ENCODE measurements at regions of chr10 and their contacts with region 1.

Region 1: DNA sequence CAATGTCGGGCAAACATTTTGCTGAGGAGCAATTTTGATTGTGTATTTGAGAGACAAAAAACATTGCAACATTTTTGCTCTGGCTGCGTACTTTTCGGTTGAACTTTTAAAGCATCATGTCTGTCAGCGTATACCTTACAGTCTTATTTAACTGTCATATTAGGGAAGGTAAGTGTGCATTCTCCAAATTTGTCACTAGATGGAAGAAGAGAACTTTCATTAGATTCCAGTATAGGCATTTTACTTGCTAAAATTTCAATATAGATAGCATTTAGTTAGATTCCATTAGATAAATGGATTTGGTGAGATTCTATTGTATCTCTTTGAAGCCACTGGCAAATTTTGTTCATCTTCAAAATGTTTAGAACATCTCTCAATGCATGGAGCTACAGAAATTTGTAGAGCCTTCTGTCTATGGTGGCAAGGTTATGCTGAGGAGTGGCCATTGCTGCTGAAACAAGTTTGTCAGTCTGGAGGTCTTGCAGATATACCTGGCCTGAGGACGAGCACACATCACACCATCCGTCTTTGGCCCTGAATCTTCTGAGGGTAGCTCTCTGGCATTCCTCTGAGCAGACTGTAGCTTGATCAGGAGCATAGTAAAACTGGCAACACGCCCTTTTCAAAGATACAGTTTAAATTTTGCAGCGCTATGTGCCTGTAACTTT is 437.5 kb upstream of the MBL2 start:
- DNase-seq: peak; percentile 97
- ATAC-seq: peak; percentile 96
- H3K4me3 ChIP-seq: no peak overlapping the region
- H3K27ac ChIP-seq: no peak overlapping the region
- H3K4me1 ChIP-seq: no peaks in the 10 kb centered on the region
- H3K27me3 ChIP-seq: no peaks in the 10 kb centered on the region
- CTCF ChIP-seq: peak; percentile 99

Region 2: DNA sequence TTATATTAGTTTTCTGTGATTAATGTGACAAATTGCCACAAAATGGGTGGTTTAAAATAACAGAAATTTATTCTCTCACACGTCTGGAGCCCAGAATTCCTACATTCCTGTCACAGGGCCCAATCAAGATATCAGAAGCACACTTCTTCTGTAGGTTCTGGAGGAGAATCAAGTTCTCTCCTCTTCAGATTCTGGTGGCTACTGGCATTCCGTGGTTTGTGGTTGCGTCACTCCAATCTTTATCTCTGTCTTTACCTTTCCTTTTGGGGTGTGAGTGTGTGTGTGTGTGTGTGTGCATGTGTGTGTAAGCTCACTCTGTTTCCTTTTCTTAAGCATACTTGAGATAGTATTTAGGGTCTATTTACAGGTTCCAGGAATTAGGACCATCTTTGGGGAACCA is 1011.5 kb before region 1 on chr10:
- CTCF ChIA-PET with region 1: no interaction called
- POLR2A ChIA-PET with region 1: no interaction called
- intact Hi-C with region 1: no loop called
- DNase-seq: no peak
- ATAC-seq: no peak
- H3K4me3 ChIP-seq: no peak overlapping the region
- H3K27ac ChIP-seq: no peak overlapping the region
- H3K4me1 ChIP-seq: no peaks in the 10 kb centered on the region
- H3K27me3 ChIP-seq: peaks cover 20% of the 10 kb centered on the region; the same call in 1 of the 2 replicates
- CTCF ChIP-seq: no peak

Region 3: GRCh38 chr10:52940921-52941320 is 269.2 kb before region 1 on chr10:
- CTCF ChIA-PET with region 1: no interaction called
- POLR2A ChIA-PET with region 1: interaction called, 13 read pairs
- intact Hi-C with region 1: no loop called
- DNase-seq: no peak
- ATAC-seq: no peak
- H3K4me3 ChIP-seq: no peak overlapping the region
- H3K27ac ChIP-seq: no peak overlapping the region
- H3K4me1 ChIP-seq: no peaks in the 10 kb centered on the region
- H3K27me3 ChIP-seq: no peaks in the 10 kb centered on the region
- CTCF ChIP-seq: no peak

Region 4: DNA sequence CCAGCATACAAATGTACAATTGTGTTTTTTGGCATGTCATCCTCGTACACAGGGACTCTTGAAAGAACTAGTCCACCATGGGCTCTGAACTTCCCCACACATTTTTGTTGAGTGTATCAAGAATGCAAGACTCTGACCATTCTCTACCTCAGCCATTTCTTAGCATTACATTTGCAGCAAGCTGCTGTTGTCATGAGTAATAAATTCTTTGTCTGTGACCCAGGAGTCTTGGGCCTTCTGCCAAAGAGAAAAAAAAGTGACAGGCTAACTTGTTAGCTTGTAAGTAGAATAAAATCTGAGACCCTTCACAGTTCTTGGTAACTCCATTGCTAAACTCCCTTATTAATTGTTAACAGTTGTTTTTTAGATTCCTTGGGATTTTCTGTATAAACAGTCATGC is 104.8 kb after region 1 on chr10:
- CTCF ChIA-PET with region 1: interaction called, 5 read pairs
- POLR2A ChIA-PET with region 1: no interaction called
- intact Hi-C with region 1: loop called (anchors 1 kb)
- DNase-seq: peak; percentile 100
- ATAC-seq: peak; percentile 97
- H3K4me3 ChIP-seq: no peak overlapping the region
- H3K27ac ChIP-seq: no peak overlapping the region
- H3K4me1 ChIP-seq: peaks cover 14% of the 10 kb centered on the region
- H3K27me3 ChIP-seq: no peaks in the 10 kb centered on the region
- CTCF ChIP-seq: no peak

Region 5: GRCh38 chr10:53434413-53434812 is 224.3 kb after region 1 on chr10:
- CTCF ChIA-PET with region 1: no interaction called
- POLR2A ChIA-PET with region 1: no interaction called
- intact Hi-C with region 1: loop called (anchors 5 kb)
- DNase-seq: no peak
- ATAC-seq: no peak
- H3K4me3 ChIP-seq: no peak overlapping the region
- H3K27ac ChIP-seq: no peak overlapping the region
- H3K4me1 ChIP-seq: no peaks in the 10 kb centered on the region
- H3K27me3 ChIP-seq: 0 out of 2 replicates have a peak, but pooled peaks cover 4% of the 10 kb centered on the region
- CTCF ChIP-seq: no peak

Region 6: DNA sequence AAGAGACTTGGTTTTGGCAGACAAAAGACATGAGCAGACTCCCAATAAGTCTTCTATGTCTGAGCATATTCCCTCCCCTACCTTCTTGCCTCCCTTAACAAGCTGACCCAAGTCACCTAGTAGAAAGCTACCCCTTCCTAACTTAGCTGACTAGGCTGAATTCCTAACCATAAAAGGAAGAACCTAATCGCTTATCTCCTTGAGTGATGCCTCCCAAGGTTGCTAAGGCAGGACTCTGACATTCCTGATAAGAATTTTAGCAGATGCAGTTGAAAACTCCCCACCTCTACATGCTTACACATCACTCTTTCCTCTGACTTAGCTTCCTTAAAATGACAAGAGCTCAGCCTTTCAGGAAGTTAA is 267.2 kb after region 1 on chr10:
- CTCF ChIA-PET with region 1: no interaction called
- POLR2A ChIA-PET with region 1: no interaction called
- intact Hi-C with region 1: loop called (anchors 5 kb)
- DNase-seq: no peak
- ATAC-seq: no peak
- H3K4me3 ChIP-seq: no peak overlapping the region
- H3K27ac ChIP-seq: no peak overlapping the region
- H3K4me1 ChIP-seq: no peaks in the 10 kb centered on the region
- H3K27me3 ChIP-seq: 0 out of 2 replicates have a peak, but pooled peaks cover 12% of the 10 kb centered on the region
- CTCF ChIP-seq: no peak

Region 7: DNA sequence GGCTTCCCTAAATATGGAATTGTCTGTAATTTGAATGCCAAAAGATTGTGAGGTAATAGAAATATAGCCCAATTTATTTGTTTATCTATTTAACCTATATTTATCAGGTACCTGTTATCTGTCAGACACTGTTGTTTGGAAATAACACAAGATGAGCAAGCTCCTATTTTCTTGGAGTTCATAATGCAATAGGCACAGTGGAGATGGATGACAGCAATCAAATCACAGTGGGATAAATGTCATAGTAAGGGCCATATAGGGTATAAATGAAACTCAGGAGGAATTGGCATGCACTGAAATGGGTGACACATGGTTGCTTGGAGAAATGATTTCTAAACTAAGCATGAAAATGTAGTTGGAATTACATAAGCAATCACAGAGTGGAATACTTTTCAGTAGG is 324.4 kb after region 1 on chr10:
- CTCF ChIA-PET with region 1: no interaction called
- POLR2A ChIA-PET with region 1: no interaction called
- intact Hi-C with region 1: loop called (anchors 5 kb)
- DNase-seq: no peak
- ATAC-seq: no peak
- H3K4me3 ChIP-seq: no peak overlapping the region
- H3K27ac ChIP-seq: no peak overlapping the region
- H3K4me1 ChIP-seq: peaks cover 6% of the 10 kb centered on the region
- H3K27me3 ChIP-seq: no peaks in the 10 kb centered on the region
- CTCF ChIP-seq: no peak

Region 8: GRCh38 chr10:53846809-53847208 is 636.7 kb after region 1 on chr10:
- CTCF ChIA-PET with region 1: no interaction called
- POLR2A ChIA-PET with region 1: no interaction called
- intact Hi-C with region 1: loop called (anchors 1 kb)
- DNase-seq: peak; percentile 37
- ATAC-seq: peak; percentile 73
- H3K4me3 ChIP-seq: no peak overlapping the region
- H3K27ac ChIP-seq: no peak overlapping the region
- H3K4me1 ChIP-seq: 0 out of 2 replicates have a peak, but pooled peaks cover 4% of the 10 kb centered on the region
- H3K27me3 ChIP-seq: no peaks in the 10 kb centered on the region
- CTCF ChIP-seq: peak; percentile 72